ENCODE measurements at regions of chr11 and their contacts with region 1.

Region 1: DNA sequence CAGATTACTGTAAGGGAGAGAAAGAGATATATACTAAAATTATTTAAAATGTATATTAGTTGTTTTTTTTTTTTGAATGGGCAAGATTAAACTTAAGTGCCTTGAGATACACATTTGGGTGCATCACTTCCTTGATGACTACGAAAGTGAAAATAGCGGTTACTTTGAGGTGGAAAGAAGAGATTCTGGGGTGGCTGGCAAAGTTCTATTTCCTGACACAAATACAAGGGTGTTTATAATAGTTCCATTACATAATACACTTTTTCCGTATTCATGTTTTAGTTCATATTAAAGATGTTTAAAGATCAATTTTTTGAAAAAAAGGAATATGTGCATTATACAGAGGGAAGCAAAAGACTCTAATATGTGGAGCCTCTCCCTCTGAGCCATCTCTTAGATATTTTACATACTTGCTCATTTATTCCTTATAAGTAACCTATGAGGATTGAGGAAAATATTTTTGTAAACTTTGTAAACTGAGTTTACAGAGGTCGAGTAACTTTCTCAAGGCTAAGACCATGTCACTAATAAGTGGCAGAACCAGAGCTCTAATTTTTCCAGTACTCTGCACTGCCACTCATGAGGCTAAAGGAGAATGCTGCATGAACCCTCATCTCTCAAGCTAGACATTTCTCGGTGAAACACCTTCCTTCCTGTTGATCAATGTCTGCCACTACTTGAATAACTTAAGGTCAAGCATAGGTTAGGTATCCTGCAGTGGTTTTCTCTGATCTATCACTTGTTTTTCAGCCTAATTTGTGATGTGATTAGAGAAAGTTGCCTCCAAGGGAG is 58.6 kb downstream of the DDIAS start:
- DNase-seq: peak in 9 of 10 donors; percentile 23 to 89 (median 70)
- ATAC-seq: peak; percentile 84 to 91
- H3K4me3 Mint-ChIP-seq: peak overlapping the region; percentile 50 to 90 (median 74)
- H3K27ac Mint-ChIP-seq: peak overlapping the region; percentile 90 to 99 (median 96)
- H3K4me1 Mint-ChIP-seq: peaks cover 39 to 95% (median 85%) of the 10 kb centered on the region in 4 donors
- H3K27me3 Mint-ChIP-seq: no peaks in the 10 kb centered on the region

Region 2: DNA sequence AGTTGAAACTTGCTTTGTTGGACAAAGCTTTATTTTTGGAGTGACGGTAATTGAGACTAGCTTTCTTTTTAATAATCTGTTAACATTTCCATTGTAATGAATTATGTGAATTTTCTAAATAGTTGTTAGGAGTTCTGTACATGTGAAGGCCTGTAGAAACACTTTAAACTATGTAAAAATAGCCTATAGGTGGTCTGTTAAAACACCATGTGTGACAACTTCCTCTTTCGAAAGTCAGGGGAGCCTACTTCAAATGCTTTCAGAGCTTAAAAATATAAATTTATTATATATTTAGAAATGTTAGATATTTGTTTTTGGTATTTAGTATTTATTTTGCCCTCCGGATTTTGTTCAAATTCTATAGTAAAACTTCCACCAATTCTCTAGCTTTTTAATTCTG is 30.0 kb before region 1 on chr11:
- POLR2A ChIA-PET with region 1: interaction called, 26 read pairs
- DNase-seq: no peak
- ATAC-seq: no peak
- H3K4me3 Mint-ChIP-seq: peak overlapping the region in 1 of 10 donors; percentile 14
- H3K27ac Mint-ChIP-seq: peak overlapping the region in 5 of 10 donors; percentile 57 to 82 (median 70)
- H3K4me1 Mint-ChIP-seq: peaks cover 14 to 59% (median 52%) of the 10 kb centered on the region in 4 donors
- H3K27me3 Mint-ChIP-seq: no peaks in the 10 kb centered on the region

Region 3: DNA sequence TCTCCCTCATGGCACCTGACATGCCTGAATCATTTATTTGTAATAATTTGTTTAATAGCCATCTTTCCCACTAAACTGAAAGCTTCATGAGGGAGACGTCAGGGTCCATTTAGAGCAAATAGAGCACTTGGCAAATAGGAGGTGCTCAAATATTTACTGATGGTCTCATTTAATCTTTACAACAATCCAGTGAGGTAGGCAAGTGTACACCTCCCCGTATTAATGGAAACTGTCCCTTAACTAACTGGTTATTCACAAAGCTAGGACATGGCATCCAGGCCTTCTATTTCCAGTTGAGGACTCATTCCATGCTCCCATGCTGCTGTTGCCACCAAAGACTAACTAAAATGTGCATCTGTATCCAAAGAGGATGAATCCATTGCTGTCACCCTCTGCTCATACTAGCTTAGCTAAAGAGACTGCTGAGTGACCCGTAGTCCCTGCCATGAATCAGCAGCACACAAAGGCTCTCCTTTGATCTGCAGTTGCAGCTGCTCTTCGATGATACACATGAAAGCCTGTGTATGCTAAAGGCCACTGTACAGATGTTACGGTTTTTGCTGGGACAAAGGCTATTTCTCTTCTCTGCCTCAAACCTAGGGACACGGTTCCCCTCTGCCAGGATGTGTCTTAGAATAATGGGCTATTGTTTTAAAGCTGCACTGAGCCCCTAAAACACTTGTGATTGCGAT is 28.9 kb after region 1 on chr11:
- POLR2A ChIA-PET with region 1: interaction called, 18 read pairs
- DNase-seq: no peak
- ATAC-seq: no peak
- H3K4me3 Mint-ChIP-seq: no peak overlapping the region
- H3K27ac Mint-ChIP-seq: peak overlapping the region in 5 of 10 donors; percentile 8 to 76 (median 48)
- H3K4me1 Mint-ChIP-seq: peaks cover 11 to 33% (median 29%) of the 10 kb centered on the region in 4 donors
- H3K27me3 Mint-ChIP-seq: no peaks in the 10 kb centered on the region

Region 4: DNA sequence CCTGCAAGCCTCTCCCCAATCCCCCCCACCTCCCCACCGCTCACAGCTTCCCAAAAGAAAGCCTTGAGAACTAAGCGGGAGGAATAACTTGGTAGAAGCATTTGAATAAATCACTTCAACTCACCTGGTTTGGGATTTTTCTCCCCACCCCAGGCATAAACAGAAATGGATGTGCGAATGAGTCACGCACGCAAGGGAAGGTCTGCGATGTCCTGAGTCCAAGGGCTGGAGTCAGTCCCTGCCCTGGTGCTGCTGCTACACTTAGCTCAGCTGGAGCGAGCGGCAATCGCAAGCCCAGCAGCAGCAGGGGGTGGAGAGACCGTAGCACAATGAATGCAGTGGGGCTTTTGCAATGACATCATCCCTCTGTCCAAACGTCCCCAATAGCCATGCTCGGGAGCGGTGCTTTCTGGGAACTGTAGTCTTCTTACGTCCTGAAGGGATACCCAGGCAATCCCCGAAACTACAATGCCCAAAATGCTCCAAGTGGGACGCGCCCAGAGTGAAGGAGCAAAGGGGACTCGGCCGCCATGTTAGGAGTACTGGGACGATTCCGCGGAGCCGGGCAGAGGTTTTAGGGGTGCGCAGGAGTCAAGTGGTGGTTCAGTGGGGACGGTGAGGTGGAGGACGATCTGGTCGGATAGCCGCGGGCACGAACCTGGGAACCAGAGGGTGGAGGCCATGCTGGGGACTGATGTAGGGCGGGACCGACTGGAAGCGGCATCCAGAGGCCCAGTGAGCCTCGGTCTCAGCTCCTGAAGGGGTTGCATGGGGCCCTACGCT is 111.6 kb after region 1 on chr11 and contains the start of gene RAB30:
- POLR2A ChIA-PET with region 1: interaction called, 13 read pairs
- DNase-seq: peak; percentile 70 to 98 (median 94)
- ATAC-seq: peak; percentile 94 to 95
- H3K4me3 Mint-ChIP-seq: no peak within 1 kb of the TSS
- H3K27ac Mint-ChIP-seq: no peak within 1 kb of the TSS
- H3K4me1 Mint-ChIP-seq: peaks cover 9 to 43% (median 26%) of the 10 kb centered on the region in 4 donors
- H3K27me3 Mint-ChIP-seq: no peaks in the 10 kb centered on the region
- polyA plus RNA-seq, gene RAB30: 10.7 to 17.4 (median 12.8) TPM

Measured in naive thymus-derived CD8-positive, alpha-beta T cell (primary cell).